Transverse colon (tissue), 4 donors: ENCODE measurements at regions of chr16 and their contacts with region 1.

Region 1: GRCh38 chr16:5541356-5541755 is 443.8 kb upstream of the EEF2KMT start:
- DNase-seq: no peak
- H3K4me3 ChIP-seq: no peak overlapping the region
- H3K27ac ChIP-seq: no peak overlapping the region
- H3K4me1 ChIP-seq: no peaks in the 10 kb centered on the region
- H3K27me3 ChIP-seq: no peaks in the 10 kb centered on the region
- CTCF ChIP-seq: no peak
- EP300 ChIP-seq: no peak
- POLR2A ChIP-seq: no peak

Region 2: GRCh38 chr16:5490499-5490898 is 50.9 kb before region 1 on chr16:
- in situ Hi-C with region 1: no loop called
- intact Hi-C with region 1: loop called (anchors 1 kb)
- DNase-seq: peak; percentile 69
- H3K4me3 ChIP-seq: no peak overlapping the region
- H3K27ac ChIP-seq: no peak overlapping the region
- H3K4me1 ChIP-seq: no peaks in the 10 kb centered on the region
- H3K27me3 ChIP-seq: no peaks in the 10 kb centered on the region
- CTCF ChIP-seq: peak; percentile 63 to 90 (median 84)
- EP300 ChIP-seq: no peak
- POLR2A ChIP-seq: no peak